Upper lobe of right lung (tissue), 1 donor: ENCODE measurements at regions of chr1 and their contacts with region 1.

Region 1: GRCh38 chr1:207404849-207405525 is 49.1 kb upstream of the CR2 start:
- DNase-seq: no peak
- ATAC-seq: peak; percentile 93
- H3K4me3 ChIP-seq: no peak overlapping the region
- H3K27ac ChIP-seq: no peak overlapping the region
- H3K4me1 ChIP-seq: no peaks in the 10 kb centered on the region
- H3K27me3 ChIP-seq: peaks cover 6% of the 10 kb centered on the region
- CTCF ChIP-seq: peak; percentile 78

Region 2: DNA sequence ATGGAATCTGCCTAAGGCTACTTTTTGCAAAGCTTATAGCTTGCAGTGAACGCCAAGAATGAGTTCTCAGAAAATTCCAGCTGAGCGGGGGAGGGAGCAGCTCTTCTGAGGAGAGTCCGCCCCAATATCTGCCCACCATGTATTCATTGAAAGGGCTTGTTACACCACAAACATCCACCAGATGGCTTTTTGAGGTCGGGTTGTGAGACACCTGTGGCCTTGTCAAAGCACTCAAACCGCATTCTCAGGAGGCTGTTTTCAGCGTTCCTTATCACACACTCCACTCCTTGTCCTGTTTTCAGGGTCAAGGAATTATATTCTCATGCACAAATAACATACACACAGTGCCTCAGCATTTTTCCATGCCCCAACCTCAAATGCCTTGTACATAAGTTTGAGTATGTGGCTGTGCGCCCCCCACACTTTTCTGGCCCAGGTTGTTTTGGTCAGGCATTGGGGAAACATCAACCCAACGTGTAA is 320.2 kb before region 1 on chr1:
- intact Hi-C with region 1: loop called (anchors 10 kb)
- DNase-seq: no peak
- ATAC-seq: peak; percentile 91
- H3K4me3 ChIP-seq: no peak overlapping the region
- H3K27ac ChIP-seq: no peak overlapping the region
- H3K4me1 ChIP-seq: no peaks in the 10 kb centered on the region
- H3K27me3 ChIP-seq: no peaks in the 10 kb centered on the region
- CTCF ChIP-seq: peak; percentile 67